ENCODE measurements at regions of chr9 and their contacts with region 1.

Region 1: GRCh38 chr9:19174127-19174912 is 47.0 kb upstream of the PLIN2 start:
- DNase-seq: peak; percentile 83
- ATAC-seq: peak; percentile 88 to 94

Region 2: GRCh38 chr9:17906176-17906840 is 1268.0 kb before region 1 on chr9:
- intact Hi-C with region 1: no loop called
- DNase-seq: peak; percentile 45
- ATAC-seq: peak; percentile 57 to 75

Region 3: GRCh38 chr9:19048966-19049916 is 125.1 kb before region 1 on chr9 and contains the start of gene RRAGA:
- intact Hi-C with region 1: loop called in 1 of 2 experiments (anchors 2 kb)
- DNase-seq: peak; percentile 94
- ATAC-seq: peak; percentile 96 to 97
- total RNA-seq, gene RRAGA: 72.1 to 94.6 TPM

Region 4: GRCh38 chr9:19102631-19103345 is 71.5 kb before region 1 on chr9 and contains the start of gene HAUS6:
- intact Hi-C with region 1: loop called in 1 of 2 experiments (anchors 2 kb)
- DNase-seq: peak; percentile 97
- ATAC-seq: peak; percentile 99 to 100
- total RNA-seq, gene HAUS6: 6.8 to 11.7 TPM

Region 5: DNA sequence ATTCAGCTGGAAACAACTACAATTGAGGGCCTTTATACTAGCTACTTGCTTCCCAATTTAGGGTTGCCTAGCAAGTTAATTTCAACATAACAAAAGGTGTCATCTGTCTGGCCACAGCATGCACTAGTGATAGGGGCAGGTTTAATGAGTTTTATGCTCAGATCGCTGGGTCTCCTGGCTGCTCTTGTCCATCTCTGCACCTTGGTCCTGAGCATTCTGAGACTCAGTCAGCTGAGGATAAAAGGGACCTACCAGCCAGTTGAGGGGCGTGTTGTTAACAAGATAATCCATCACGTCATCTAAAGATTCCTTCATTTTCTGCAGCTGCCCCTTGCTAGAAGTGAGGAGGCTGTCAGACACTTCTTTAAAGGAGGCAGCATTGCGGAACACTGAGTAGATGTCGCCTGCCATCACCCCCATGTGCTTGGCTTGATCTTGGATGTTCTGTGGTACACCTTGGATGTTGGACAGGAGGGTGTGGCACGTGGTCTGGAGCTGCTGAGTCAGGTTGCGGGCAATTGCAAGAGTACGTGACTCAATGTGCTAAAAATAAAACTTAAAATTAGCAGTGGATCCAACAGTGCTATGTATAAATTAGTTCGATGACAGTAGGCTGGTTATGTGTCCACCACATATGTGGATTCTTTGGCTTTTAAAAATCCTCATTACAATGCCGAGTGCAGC is 58.1 kb before region 1 on chr9:
- intact Hi-C with region 1: loop called in 1 of 2 experiments (anchors 10 kb)
- DNase-seq: peak; percentile 66
- ATAC-seq: peak; percentile 56 to 75

Region 6: GRCh38 chr9:19230356-19231125 is 56.2 kb after region 1 on chr9 and contains the start of gene DENND4C:
- intact Hi-C with region 1: no loop called
- DNase-seq: peak; percentile 91
- ATAC-seq: peak; percentile 90 to 94
- total RNA-seq, gene DENND4C: 35.3 to 45.3 TPM

Region 7: GRCh38 chr9:19397845-19398244 is 223.5 kb after region 1 on chr9:
- intact Hi-C with region 1: no loop called
- DNase-seq: no peak
- ATAC-seq: no peak